Aorta (tissue), 5 donors: ENCODE measurements at regions of chr16 and their contacts with region 1.

Region 1: GRCh38 chr16:30984669-30985400 is at the start of gene HSD3B7:
- DNase-seq: peak; percentile 94 to 98
- ATAC-seq: peak; percentile 94
- H3K4me3 ChIP-seq: peak within 1 kb of the TSS in 1 of 2 donors; percentile 18
- H3K27ac ChIP-seq: no peak within 1 kb of the TSS
- H3K4me1 ChIP-seq: no peaks in the 10 kb centered on the region
- H3K27me3 ChIP-seq: no peaks in the 10 kb centered on the region
- total RNA-seq, gene HSD3B7: 13.6 to 31.3 TPM

Region 2: GRCh38 chr16:31032736-31033708 is 48.2 kb after region 1 on chr16 and contains the start of gene STX4:
- intact Hi-C with region 1: loop called in 1 of 2 experiments (anchors 5 kb)
- DNase-seq: peak; percentile 99 to 100
- ATAC-seq: peak; percentile 96
- H3K4me3 ChIP-seq: peak within 1 kb of the TSS; percentile 76 to 89
- H3K27ac ChIP-seq: peak within 1 kb of the TSS; percentile 6 to 83
- H3K4me1 ChIP-seq: peaks cover 0 to 1% of the 10 kb centered on the region in 2 donors
- H3K27me3 ChIP-seq: no peaks in the 10 kb centered on the region
- total RNA-seq, gene STX4: 73.5 to 88.6 TPM

Region 3: DNA sequence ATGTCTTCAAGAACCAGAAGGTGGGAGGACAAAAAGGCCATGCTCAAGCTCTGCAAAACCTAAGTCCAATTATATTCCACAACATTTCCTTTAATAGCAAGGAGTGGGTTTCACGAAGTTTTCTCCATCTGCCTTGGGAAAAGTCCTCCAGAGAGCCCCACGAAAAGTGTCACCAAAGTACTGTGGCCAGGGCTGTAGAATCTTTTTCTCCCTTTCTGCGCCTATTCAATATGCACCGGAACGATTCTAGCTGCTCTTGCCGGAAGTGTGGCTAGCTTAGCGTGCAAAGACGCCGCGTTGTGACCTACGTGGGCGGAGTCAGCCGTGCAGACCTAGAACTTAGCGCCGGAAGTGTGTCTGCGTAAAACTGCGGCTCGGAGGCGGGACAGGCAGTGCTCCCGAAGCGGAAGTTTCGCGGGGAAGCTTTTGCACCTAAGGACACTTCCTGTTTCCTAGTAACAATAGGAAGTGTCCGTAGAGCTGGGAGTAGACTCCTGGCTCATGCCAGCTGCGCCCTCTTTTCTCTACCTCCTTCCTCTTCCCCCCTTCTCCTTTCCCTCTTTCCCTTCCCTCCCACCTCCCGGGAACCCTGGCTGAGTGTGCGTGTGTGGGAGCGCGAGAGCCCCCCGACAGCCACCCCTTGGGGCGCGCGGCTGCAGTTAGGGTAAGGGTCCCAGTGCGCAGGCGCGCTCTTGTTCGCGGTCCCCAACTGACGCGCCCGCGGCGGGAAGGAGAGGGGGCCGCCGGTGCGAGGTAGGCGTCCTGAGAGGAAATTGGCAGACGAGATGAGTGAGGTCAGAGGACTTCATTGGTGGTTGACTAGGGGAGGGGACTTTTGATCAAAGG is 89.4 kb after region 1 on chr16 and contains the starts of genes ZNF646 and ZNF668:
- intact Hi-C with region 1: loop called in 1 of 2 experiments (anchors 10 kb)
- DNase-seq: peak; percentile 99
- ATAC-seq: peak; percentile 96
- H3K4me3 ChIP-seq: peak within 1 kb of the TSS; percentile 84 to 97
- H3K27ac ChIP-seq: peak within 1 kb of the TSS; percentile 20 to 97
- H3K4me1 ChIP-seq: peaks cover 0 to 3% of the 10 kb centered on the region in 2 donors
- H3K27me3 ChIP-seq: no peaks in the 10 kb centered on the region
- total RNA-seq, gene ZNF646: 12.6 to 15.0 TPM
- total RNA-seq, gene ZNF668: 7.4 to 10.3 TPM

Region 4: DNA sequence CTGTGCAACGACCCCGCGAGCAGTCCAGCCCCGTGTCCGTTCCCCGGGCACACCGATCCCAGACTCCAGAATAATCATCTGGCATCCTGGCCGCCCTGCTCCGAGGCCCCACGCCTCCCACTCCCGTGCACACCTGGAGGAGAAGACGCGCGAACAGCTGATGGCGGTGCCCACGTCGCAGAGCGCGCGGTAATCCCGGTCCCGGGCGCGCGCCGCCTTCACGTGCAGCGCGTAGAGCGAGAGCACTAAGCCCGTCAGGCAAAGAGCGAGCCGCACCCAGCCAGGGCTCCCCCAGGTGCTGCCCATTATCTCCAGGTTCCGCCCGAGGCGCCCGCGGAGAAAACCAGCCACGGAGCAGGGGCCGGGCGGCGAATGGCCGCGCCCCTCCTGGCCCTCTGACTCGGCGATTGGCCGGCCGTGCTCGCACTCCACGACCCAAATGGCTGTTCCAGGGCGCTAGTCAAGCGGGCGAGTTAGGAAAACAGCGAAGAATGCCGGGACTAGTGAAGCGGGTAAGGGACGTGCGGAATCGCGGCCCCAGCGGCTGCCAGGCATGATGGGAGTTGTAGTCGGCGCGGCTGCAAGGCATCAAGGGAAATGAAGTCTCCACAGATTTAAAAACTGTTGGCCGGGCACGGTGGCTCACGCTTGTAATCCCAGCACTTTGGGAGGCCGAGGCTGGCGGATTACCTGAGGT is 109.7 kb after region 1 on chr16 and contains the start of gene VKORC1:
- intact Hi-C with region 1: loop called in 1 of 2 experiments (anchors 5 kb)
- DNase-seq: peak; percentile 97 to 98
- ATAC-seq: peak; percentile 95
- H3K4me3 ChIP-seq: peak within 1 kb of the TSS; percentile 58 to 78
- H3K27ac ChIP-seq: peak within 1 kb of the TSS in 1 of 2 donors; percentile 69
- H3K4me1 ChIP-seq: no peaks in the 10 kb centered on the region
- H3K27me3 ChIP-seq: no peaks in the 10 kb centered on the region
- total RNA-seq, gene VKORC1: 75.7 to 109 TPM

Region 5: DNA sequence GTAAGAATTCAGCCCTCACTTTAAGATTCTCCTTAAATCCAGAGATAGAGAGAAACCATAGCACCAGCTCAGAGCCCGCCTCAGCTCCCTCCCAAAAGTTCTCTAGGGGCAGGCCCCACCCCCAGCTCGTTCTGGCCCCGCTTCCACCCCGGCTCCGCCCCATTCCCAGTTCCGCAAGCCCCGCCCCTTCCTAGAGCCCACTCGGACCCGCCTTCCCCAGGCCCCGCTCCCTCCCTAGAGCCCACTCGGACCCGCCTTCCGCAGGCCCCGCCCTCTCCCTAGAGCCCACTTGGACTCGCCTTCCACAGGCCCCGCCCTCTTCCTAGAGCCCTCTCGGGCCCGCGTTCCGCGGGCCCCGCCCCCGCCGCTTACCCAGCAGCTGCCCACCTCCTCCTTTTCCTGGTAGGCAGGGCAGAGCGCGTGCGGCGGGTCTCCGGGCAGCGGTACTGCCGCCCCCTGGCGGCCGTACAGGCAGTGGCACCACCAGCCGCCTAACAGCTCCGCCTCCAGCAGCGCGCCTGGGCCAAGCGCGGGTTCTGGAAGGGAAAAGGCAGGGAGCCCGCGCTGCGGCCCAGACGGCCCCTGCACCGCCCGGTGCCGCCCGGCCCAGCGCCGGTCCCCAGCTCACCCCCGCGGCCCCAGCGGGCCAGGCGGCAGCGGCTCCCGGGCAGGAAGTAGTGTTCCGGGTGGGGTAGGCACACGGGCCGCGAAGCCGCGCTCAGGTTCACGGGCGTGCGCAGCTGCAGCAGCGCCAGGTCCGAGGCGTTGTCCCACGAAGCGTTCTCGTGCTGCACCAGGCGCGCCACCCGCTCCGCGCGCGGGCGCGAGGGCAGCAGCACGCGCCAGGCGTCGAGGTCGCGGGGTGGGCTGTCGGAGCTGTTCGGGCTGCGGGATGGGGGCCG is 157.5 kb after region 1 on chr16:
- intact Hi-C with region 1: loop called in 1 of 2 experiments (anchors 10 kb)
- DNase-seq: peak; percentile 99 to 100
- ATAC-seq: peak; percentile 99
- H3K4me3 ChIP-seq: peak overlapping the region in 1 of 2 donors; percentile 5
- H3K27ac ChIP-seq: peak overlapping the region in 1 of 2 donors; percentile 77
- H3K4me1 ChIP-seq: peaks cover 0 to 3% of the 10 kb centered on the region in 2 donors
- H3K27me3 ChIP-seq: no peaks in the 10 kb centered on the region

Region 6: DNA sequence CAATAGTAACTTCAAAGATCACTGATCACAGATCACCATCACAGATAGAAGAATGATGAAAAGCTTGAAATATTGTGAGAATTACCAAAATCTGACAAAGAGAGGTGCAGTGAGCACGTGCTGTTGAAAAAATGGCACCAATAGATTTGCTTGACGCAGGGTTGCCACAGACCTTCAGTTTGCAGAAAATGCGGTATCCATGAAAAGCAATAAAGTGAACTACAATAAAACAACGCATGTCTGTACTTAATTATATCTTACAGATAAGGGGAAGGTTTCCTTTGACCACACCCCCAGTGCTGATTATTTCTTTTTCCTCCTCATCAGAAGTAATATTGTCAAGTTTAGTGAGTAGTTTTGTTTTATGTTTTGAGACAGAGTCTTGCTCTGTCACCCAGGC is 253.2 kb after region 1 on chr16:
- intact Hi-C with region 1: no loop called
- DNase-seq: no peak
- ATAC-seq: no peak
- H3K4me3 ChIP-seq: no peak overlapping the region
- H3K27ac ChIP-seq: no peak overlapping the region
- H3K4me1 ChIP-seq: peaks cover 0 to 1% of the 10 kb centered on the region in 2 donors
- H3K27me3 ChIP-seq: no peaks in the 10 kb centered on the region

Region 7: GRCh38 chr16:31440516-31441184 is 455.8 kb after region 1 on chr16:
- intact Hi-C with region 1: loop called (anchors 1 to 2 kb)
- DNase-seq: no peak
- ATAC-seq: no peak
- H3K4me3 ChIP-seq: no peak overlapping the region
- H3K27ac ChIP-seq: no peak overlapping the region
- H3K4me1 ChIP-seq: no peaks in the 10 kb centered on the region
- H3K27me3 ChIP-seq: no peaks in the 10 kb centered on the region

Region 8: GRCh38 chr16:31868691-31869167 is 883.9 kb after region 1 on chr16:
- intact Hi-C with region 1: loop called (anchors 5 kb)
- DNase-seq: peak; percentile 90 to 91
- ATAC-seq: peak; percentile 72
- H3K4me3 ChIP-seq: no peak overlapping the region
- H3K27ac ChIP-seq: no peak overlapping the region
- H3K4me1 ChIP-seq: no peaks in the 10 kb centered on the region
- H3K27me3 ChIP-seq: no peaks in the 10 kb centered on the region